ENCODE measurements at regions of chr11 and their contacts with region 1.

Region 1: DNA sequence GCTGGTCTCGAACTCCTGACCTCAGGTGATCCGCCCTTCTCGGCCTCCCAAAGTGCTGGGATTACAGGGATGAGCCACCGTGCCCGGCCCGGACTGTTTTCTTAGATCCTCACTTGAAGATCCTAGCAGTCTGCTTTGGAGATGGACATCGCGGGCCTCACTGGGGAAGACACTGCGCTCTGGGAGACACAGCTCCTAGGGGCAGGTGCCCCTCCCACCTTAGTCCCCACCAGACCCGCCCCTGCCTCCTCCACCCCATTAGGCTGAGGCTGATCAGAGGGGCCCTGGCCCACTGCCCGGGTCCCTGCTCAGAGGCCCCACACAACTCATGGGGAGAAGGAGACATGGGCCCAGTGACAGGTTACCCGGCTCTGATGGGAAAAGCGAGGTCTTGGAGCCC is 11.3 kb upstream of the LTO1 start:
- DNase-seq: no peak
- H3K4me3 Mint-ChIP-seq: no peak overlapping the region
- H3K27ac Mint-ChIP-seq: no peak overlapping the region
- H3K4me1 Mint-ChIP-seq: peaks cover 10% of the 10 kb centered on the region
- H3K27me3 Mint-ChIP-seq: peaks cover 20% of the 10 kb centered on the region

Region 2: DNA sequence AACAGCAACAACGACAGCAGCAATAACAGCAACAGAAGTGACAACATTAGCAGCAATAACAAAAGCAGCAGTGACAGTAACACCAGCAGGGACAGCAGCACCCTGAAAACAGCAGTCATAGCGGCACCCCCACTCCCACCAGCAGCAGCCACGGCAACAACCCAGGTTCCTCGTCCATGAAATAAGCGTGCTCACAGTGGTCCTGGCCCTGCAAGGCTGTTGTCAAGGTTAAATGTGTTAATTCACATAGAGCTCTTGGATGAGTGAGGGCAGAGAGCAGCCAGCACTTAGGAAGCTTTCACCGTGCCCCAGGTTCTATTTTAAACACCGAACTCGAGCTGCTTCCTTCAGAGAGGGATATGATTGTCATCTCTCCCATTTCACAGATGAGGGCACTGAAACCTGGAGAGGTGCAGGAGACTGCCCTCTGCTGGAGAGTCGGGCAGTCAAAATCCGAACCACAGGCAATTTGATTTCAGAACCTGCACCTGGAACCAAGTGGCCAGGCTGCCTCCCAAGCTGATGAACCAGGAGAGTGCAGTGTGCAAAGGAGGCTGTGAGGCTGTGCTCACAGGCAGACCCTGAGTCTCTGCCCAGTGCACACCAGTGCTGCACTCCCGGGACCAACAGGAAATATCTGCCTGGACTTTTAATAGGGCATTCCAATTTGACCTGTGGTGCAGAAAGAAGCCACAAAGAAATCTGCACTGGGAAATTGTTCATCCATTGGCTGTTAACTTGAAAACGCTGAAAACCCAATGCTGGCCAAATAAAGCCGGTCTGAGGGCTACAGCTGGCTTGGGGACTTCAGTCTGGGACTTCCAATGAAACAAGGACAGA is 155.6 kb after region 1 on chr11:
- CTCF ChIA-PET with region 1: interaction called, 5 read pairs
- POLR2A ChIA-PET with region 1: no interaction called
- intact Hi-C with region 1: loop called (anchors 5 kb)
- DNase-seq: peak; percentile 34
- H3K4me3 Mint-ChIP-seq: no peak overlapping the region
- H3K27ac Mint-ChIP-seq: no peak overlapping the region
- H3K4me1 Mint-ChIP-seq: no peaks in the 10 kb centered on the region
- H3K27me3 Mint-ChIP-seq: peaks cover 13% of the 10 kb centered on the region

Measured in activated CD4-positive, alpha-beta memory T cell treated with anti-CD3 and anti-CD28 coated beads for 36 hours (primary cell).